ENCODE measurements at regions of chr22 and their contacts with region 1.

Region 1: DNA sequence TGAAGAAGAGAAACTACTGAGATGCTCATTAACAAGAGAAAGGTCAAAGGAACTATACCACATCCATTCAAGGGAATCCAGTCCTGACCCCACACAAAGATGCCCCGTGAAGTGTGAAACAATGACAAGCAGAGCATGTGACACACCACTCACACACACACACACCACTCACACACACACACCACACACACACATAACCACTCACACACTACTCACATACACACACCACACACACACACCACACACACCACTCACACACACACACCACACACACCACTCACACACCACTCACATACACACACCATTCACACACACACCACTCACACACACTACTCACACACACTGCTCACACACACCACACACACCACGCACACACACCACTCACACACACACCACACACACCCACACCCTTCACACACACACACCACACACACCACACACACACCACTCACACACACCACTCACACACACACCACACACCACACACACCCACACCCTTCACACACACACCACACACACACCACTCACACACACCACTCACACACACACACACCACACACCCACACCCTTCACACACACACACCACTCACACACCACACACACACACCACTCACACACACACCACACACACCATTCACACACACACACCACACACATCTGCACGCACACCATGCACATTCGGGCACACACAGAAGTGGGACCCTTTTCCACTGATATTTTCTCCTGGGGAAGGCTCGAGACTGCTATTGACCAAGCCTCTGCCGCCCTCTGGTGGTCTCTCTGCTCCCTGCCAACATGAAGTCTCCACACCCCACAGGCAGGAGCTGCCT is 32.0 kb upstream of the COMT start:
- ATAC-seq: peak; percentile 95 to 98 (median 98)
- H3K4me3 ChIP-seq: no peak overlapping the region
- H3K27ac ChIP-seq: no peak overlapping the region
- H3K4me1 ChIP-seq: peaks cover 2 to 8% of the 10 kb centered on the region in 2 donors

Region 2: GRCh38 chr22:19717691-19718455 is 191.7 kb before region 1 on chr22:
- in situ Hi-C with region 1: loop called in 2 of 9 experiments (anchors 10 to 25 kb)
- ATAC-seq: peak; percentile 62 to 87 (median 68)
- H3K4me3 ChIP-seq: peak overlapping the region; percentile 32 to 52 (median 33)
- H3K27ac ChIP-seq: no peak overlapping the region
- H3K4me1 ChIP-seq: peaks cover 38 to 40% of the 10 kb centered on the region in 2 donors

Region 3: DNA sequence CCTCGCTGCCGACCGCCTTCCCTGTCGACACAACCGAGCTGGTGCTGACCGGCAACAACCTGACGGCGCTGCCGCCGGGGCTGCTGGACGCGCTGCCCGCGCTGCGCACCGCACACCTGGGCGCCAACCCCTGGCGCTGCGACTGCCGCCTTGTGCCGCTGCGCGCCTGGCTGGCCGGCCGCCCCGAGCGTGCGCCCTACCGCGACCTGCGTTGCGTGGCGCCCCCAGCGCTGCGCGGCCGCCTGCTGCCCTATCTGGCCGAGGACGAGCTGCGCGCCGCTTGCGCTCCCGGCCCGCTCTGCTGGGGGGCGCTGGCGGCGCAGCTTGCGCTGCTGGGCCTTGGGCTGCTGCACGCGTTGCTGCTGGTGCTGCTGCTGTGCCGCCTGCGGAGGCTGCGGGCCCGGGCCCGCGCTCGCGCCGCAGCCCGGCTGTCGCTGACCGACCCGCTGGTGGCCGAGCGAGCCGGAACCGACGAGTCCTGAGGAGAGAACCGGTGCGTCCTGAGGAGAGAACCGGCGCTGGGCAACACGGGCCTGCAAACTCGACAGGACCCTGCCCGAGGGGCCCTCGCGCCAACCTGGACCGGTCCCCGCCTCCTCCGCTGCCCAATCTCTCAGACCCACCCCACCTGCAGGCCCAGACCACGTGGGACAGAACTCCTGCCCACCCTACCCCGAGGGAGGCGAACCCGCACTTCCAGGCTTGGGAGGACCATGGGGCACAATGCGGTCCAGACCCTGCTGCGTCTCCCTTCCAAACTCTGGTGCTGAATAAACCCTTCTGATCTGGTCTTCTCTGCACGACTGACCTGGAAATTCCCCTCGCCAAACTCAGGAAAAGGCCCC is 185.4 kb before region 1 on chr22:
- in situ Hi-C with region 1: loop called in 2 of 9 experiments (anchors 10 to 25 kb)
- ATAC-seq: peak in 5 of 8 experiments; percentile 79 to 83 (median 81)
- H3K4me3 ChIP-seq: peak overlapping the region; percentile 5 to 28 (median 17)
- H3K27ac ChIP-seq: peak overlapping the region in 1 of 2 donors; percentile 48
- H3K4me1 ChIP-seq: peaks cover 27 to 34% of the 10 kb centered on the region in 2 donors

Region 4: DNA sequence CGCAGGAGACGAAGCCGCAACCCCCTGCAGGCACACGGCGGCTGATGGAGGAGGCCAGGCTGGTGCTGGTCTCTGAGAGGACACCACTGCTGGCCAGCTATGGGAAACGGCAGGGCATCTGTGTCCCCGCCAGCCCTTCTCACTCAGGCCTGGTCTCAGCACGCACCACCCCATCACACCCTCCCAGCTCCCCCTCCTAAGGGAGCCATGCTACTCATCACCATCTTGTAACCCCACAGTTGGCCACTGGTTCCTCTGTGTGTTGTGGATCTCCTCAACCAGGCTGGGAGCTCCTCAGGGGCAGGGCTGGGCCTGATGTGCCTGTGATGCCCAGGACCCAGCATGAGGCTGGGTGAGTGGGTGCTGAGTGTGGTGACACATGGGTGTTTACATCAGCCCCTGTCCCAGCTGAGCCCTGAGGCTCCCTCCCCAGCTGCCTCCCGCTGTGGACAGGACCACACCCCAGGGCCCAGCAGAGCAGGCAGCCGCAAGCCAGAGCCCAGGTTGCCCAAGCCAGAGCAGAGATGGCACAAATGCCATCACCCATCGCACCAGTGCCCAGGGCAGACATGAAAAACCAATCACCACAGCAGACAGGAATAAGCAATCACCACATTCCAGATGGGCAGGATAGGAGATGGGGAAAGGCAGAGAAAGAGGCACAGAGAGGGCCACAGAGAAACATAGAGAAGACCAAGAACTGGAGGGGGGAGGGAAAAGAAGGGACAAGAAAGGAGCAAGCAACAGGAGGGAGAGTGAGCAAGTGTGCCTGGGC is 98.8 kb after region 1 on chr22:
- in situ Hi-C with region 1: no loop called
- ATAC-seq: peak in 5 of 8 experiments; percentile 17 to 58 (median 31)
- H3K4me3 ChIP-seq: no peak overlapping the region
- H3K27ac ChIP-seq: no peak overlapping the region
- H3K4me1 ChIP-seq: peaks cover 12 to 19% of the 10 kb centered on the region in 2 donors

Measured in motor neuron (in vitro differentiated cells).